Transverse colon (tissue), 4 donors: ENCODE measurements at regions of chr18 and their contacts with region 1.

Region 1: GRCh38 chr18:12315911-12316310 is 7.9 kb downstream of the TUBB6 start:
- DNase-seq: no peak
- H3K4me3 ChIP-seq: no peak overlapping the region
- H3K27ac ChIP-seq: peak overlapping the region; percentile 57 to 85 (median 69)
- H3K4me1 ChIP-seq: peaks cover 4 to 50% (median 31%) of the 10 kb centered on the region in 4 donors
- H3K27me3 ChIP-seq: no peaks in the 10 kb centered on the region
- CTCF ChIP-seq: no peak
- EP300 ChIP-seq: no peak
- POLR2A ChIP-seq: no peak

Region 2: DNA sequence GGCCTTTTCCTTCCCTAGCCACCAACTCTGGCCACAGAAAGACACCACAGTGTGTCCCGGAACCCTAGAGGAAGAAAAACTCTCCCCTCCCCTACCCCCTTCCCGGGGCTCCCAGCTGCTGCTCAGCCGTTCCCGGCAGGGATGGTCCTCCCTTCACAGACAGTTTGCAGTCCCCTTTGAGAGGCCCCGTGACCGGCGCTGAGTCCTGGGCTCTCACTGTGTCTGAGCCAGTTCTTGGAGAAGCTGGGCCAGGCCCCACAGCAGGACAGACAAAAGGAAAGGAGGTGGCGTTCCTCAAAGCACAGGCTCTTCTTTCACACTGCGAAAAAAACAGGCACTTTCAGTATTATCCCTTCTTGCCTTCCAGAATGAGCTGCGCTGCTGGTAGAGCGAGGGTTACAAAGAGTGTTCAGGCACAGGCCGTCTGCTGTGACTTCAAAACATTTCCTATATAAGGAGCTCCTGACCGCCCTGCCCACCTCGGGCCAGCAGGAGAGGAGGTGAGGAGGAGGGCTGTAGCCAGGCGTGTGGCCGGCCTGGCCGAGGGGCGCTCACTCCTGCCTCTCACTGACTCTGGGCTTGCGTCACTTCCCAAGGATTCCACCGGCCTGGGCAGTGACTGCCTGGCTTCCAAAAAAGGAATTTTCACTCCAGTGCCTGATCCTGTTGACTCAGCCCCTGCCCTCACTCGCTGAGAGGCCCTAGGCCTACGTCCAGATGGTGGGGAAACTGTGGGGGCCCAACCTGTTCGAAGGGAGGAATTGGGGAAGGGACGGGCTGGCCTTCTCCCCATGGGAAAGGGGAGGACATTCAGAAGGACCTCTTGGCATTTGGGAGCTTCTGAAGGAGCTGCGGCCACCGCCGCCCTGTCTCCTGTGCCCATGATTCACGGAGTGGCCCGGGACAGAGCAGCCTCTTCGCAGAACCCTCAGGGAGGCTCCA is 36.9 kb before region 1 on chr18:
- in situ Hi-C with region 1: no loop called
- intact Hi-C with region 1: loop called (anchors 2 kb)
- DNase-seq: peak; percentile 69
- H3K4me3 ChIP-seq: peak overlapping the region; percentile 20 to 37 (median 27)
- H3K27ac ChIP-seq: peak overlapping the region; percentile 90 to 97 (median 94)
- H3K4me1 ChIP-seq: peaks cover 4 to 24% (median 6%) of the 10 kb centered on the region in 4 donors
- H3K27me3 ChIP-seq: no peaks in the 10 kb centered on the region
- CTCF ChIP-seq: peak in 2 of 5 experiments; percentile 23 to 42
- EP300 ChIP-seq: peak; percentile 36
- POLR2A ChIP-seq: peak; percentile 63

Region 3: DNA sequence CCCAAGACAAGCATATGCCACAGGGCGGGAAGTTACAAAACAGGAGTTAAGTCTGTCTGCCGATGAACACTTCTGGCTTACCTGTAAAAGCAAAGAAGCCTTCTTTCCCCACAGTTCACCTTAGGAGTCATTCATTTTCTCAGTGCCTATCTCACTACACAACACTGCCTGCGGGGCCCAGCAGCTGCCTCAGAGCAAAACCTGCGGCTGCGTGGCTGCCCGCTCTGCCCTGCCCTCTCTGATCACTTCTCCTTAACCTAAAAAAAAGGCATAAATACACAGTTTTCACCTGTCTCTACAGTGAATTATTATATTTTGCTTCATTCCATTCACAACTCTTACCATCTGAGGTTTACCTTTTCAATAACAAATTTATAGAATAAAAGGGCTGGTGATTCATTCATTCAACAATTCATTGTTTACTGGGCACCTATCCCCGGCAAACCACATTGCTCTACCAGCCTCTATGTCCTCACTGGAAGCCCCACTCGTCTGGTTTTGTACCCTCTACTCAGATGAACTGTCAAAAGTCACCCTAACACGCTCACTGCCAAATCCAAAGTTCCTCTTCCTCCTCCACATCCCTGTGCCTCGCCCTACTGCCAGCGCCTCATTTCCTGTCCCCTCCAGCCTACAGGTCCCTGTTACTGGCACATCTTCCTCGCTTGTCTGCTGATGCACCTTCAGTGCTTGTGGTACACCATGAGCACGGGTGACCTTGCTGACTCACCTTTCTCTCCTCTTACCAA is 29.8 kb after region 1 on chr18:
- in situ Hi-C with region 1: no loop called
- intact Hi-C with region 1: no loop called
- DNase-seq: no peak
- H3K4me3 ChIP-seq: no peak overlapping the region
- H3K27ac ChIP-seq: no peak overlapping the region
- H3K4me1 ChIP-seq: no peaks in the 10 kb centered on the region
- H3K27me3 ChIP-seq: no peaks in the 10 kb centered on the region
- CTCF ChIP-seq: no peak
- EP300 ChIP-seq: no peak
- POLR2A ChIP-seq: no peak